ENCODE measurements at regions of chr3 and their contacts with region 1.

Region 1: DNA sequence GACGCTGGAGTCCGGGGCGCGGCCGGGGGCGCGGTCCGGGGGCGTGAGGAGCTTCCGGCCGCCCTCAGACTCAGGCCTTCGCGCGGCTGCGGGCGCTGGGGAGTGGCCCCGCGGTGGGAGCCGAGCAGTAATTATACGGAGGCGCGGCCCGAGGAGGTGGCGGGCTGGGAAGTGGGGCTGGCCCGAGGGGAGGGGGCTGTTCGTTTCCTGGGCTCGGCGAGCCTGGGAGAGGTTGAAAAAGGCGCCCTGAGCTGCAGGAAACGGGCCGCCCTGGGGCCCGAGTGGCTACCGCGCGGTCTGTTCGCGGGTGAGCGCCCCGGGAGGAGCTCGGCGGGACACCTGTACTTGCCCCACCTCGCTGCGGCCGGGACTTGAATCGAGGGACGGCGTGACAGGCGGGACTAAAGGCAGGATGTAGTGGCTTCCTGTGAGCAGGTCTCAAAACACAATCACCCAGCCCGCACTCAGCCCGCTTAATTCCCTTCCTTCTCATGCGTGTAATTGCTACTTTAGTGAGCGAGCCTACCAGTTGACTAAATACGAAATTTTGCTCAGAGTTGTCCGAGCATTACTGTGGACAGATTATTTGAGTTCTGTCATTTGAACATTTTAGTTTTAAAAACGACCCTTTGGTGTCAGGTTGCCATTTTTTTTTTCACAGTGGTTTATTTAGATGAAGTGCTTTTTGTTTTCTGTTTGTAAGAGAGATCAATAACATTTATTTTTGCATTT is 860 bp downstream of the RASA2 start:
- DNase-seq: peak; percentile 95
- ATAC-seq: peak; percentile 66
- H3K4me3 Mint-ChIP-seq: peak overlapping the region; percentile 87
- H3K27ac Mint-ChIP-seq: peak overlapping the region; percentile 99
- H3K4me1 Mint-ChIP-seq: peaks cover 64% of the 10 kb centered on the region
- H3K27me3 Mint-ChIP-seq: no peaks in the 10 kb centered on the region
- CTCF ChIP-seq: no peak

Region 2: DNA sequence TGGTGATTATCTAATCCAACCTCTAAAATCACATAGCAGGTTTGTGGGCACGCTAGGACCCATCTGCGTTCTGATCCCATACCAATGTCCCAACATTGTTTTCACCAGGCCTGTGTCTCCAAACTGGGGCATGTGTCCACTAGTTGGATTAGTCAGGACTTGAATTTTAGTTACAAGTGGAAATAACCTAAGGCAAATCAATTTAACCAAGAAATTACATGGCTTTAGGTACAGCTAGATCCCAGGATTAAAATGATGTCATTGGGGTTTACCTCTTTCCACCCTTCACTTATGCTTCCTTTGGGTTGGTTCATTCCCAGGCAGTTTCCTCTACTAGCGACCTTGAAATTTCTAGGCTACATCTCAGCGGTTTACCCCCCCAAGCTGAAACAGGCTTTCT is 303.3 kb before region 1 on chr3:
- CTCF ChIA-PET with region 1: no interaction called
- POLR2A ChIA-PET with region 1: no interaction called
- intact Hi-C with region 1: no loop called
- DNase-seq: no peak
- ATAC-seq: no peak
- H3K4me3 Mint-ChIP-seq: no peak overlapping the region
- H3K27ac Mint-ChIP-seq: no peak overlapping the region
- H3K4me1 Mint-ChIP-seq: no peaks in the 10 kb centered on the region
- H3K27me3 Mint-ChIP-seq: no peaks in the 10 kb centered on the region
- CTCF ChIP-seq: no peak

Region 3: DNA sequence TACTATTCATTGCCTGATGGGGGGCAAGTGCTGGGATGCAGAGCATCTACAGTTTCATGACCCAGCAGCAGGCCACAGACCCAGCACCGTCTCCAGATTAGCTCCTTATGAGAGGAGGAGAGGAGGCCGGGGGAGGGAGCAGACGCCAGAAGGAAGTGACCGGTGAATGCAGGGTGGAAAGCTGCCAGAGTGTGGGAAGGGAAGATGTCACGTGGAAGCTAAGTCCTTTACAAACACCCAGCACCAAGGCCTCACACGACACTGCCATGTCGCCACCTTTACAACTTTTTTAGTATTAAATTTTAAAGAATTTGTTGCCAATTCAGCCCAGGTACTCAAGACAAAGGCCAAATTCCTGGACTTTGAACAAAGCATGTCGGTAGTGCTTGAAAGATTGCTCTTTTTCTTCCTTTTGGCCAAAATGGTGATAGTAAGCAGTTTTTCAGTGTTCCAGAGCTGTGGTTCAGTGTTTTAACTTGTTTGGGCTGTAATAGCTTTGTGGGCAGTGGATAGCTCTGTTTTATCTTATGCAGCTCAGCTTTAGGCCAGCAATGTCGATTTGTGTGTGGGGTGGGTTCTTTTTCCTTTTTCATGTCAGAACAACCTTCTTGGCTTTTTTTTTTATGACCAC is 61.2 kb before region 1 on chr3:
- CTCF ChIA-PET with region 1: no interaction called
- POLR2A ChIA-PET with region 1: no interaction called
- intact Hi-C with region 1: no loop called
- DNase-seq: no peak
- ATAC-seq: no peak
- H3K4me3 Mint-ChIP-seq: no peak overlapping the region
- H3K27ac Mint-ChIP-seq: no peak overlapping the region
- H3K4me1 Mint-ChIP-seq: peaks cover 18% of the 10 kb centered on the region
- H3K27me3 Mint-ChIP-seq: no peaks in the 10 kb centered on the region
- CTCF ChIP-seq: no peak

Region 4: DNA sequence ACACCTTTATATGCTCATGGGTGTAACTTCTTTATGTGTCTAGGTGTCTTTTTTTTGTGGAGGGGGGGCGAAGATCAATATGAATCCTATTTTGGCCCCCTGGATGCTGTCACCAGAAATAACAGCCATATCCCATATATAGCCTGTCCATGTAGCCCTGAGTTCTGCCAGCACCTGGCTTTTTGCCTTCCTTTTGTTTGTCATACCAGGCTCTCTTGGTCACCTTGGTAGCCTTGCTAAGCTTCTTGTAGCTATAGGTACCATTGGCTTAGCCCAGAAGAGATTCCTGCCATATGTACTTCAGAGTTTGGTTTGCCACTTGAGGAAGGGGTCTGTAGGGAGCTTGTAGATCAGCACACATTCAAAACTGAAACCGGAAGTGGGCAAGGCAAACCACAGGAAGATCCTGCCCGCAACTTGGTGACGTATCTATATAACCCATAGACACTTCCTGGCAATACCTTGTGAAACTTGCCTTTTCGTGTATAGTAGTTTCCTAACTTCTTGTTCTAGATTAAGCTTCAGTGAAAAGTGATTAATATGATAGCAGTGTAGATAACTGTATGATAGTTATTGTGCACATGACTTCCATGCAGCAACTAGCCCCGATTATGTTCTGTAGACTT is 11.0 kb after region 1 on chr3:
- CTCF ChIA-PET with region 1: interaction called, 24 read pairs
- POLR2A ChIA-PET with region 1: interaction called, 102 read pairs
- intact Hi-C with region 1: loop called (anchors 1 kb)
- DNase-seq: peak; percentile 95
- ATAC-seq: peak; percentile 83
- H3K4me3 Mint-ChIP-seq: peak overlapping the region; percentile 63
- H3K27ac Mint-ChIP-seq: peak overlapping the region; percentile 97
- H3K4me1 Mint-ChIP-seq: peaks cover 67% of the 10 kb centered on the region
- H3K27me3 Mint-ChIP-seq: no peaks in the 10 kb centered on the region
- CTCF ChIP-seq: no peak

Region 5: GRCh38 chr3:141523615-141524375 is 36.1 kb after region 1 on chr3:
- CTCF ChIA-PET with region 1: no interaction called
- POLR2A ChIA-PET with region 1: interaction called, 20 read pairs
- intact Hi-C with region 1: no loop called
- DNase-seq: no peak
- ATAC-seq: peak; percentile 46
- H3K4me3 Mint-ChIP-seq: no peak overlapping the region
- H3K27ac Mint-ChIP-seq: peak overlapping the region; percentile 64
- H3K4me1 Mint-ChIP-seq: peaks cover 71% of the 10 kb centered on the region
- H3K27me3 Mint-ChIP-seq: no peaks in the 10 kb centered on the region
- CTCF ChIP-seq: no peak

Region 6: DNA sequence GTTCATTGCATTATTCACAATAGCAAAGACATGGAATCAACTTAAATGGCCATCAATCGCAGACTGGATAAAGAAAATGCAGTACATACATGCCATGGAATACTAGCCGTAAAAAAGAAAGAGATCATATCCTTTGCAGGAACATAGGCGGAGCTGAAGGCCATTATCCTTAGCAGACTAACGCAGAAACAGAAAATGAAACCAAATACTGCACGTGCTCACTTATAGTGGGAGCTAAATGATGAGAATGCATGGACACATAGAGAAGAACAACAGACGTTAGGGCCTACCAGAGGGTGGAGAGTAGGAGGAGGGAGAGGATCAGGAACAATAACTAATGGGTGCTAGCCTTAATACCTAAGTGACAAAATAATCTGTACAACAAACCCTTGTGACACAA is 57.0 kb after region 1 on chr3:
- CTCF ChIA-PET with region 1: interaction called, 3 read pairs
- POLR2A ChIA-PET with region 1: interaction called, 99 read pairs
- intact Hi-C with region 1: no loop called
- DNase-seq: no peak
- ATAC-seq: peak; percentile 52
- H3K4me3 Mint-ChIP-seq: peak overlapping the region; percentile 18
- H3K27ac Mint-ChIP-seq: peak overlapping the region; percentile 87
- H3K4me1 Mint-ChIP-seq: peaks cover 83% of the 10 kb centered on the region
- H3K27me3 Mint-ChIP-seq: no peaks in the 10 kb centered on the region
- CTCF ChIP-seq: no peak

Region 7: DNA sequence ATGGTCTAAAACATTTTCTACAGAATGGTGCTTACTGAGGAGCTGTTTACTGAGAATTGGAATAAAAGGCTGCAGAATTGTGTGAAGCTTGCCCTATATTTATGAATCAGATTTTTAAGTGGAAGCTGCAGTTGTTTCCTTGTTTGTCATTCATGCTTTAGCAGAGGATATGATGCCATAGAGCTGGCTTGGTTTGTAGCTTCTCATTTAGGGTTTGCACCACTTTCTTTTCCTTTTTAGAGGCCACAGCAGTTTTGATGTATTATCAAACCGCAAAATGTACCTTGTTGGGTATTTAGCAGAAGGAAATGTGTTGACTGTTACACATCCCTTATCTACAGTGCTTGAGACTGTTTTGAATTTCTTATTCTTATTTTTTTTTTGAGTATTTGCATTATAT is 65.4 kb after region 1 on chr3:
- CTCF ChIA-PET with region 1: interaction called, 74 read pairs
- POLR2A ChIA-PET with region 1: interaction called, 99 read pairs
- intact Hi-C with region 1: loop called (anchors 5 kb)
- DNase-seq: peak; percentile 25
- ATAC-seq: peak; percentile 71
- H3K4me3 Mint-ChIP-seq: peak overlapping the region; percentile 2
- H3K27ac Mint-ChIP-seq: peak overlapping the region; percentile 91
- H3K4me1 Mint-ChIP-seq: peaks cover 56% of the 10 kb centered on the region
- H3K27me3 Mint-ChIP-seq: no peaks in the 10 kb centered on the region
- CTCF ChIP-seq: no peak

Region 8: DNA sequence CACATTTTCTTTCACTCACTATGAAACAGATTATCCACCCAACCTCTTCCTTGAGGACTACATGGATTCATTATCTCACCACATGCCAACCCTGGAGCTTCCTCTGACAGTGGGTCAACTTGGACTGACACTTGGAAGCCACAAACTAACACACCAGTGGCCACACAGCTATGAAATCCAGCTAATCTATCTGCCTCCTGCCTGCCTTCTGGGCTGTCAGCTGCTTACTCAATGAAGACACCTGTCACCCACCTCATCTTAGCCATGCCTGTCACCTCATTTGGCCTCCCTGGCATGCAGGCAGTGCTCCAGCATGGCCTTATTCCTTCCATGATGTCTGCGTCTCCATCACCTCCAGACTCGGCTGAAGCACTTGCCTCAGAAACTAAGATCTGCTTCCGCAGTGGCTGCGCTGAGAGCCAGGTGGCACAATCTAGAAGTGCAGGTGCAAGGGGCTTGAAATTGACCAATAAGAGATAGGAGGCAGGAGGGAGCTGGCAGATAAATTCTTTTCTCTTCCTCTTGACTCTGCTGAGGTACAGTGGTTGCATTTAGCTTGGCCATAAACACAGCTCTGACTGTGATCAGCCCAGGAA is 145.2 kb after region 1 on chr3:
- CTCF ChIA-PET with region 1: no interaction called
- POLR2A ChIA-PET with region 1: no interaction called
- intact Hi-C with region 1: no loop called
- DNase-seq: no peak
- ATAC-seq: no peak
- H3K4me3 Mint-ChIP-seq: no peak overlapping the region
- H3K27ac Mint-ChIP-seq: no peak overlapping the region
- H3K4me1 Mint-ChIP-seq: no peaks in the 10 kb centered on the region
- H3K27me3 Mint-ChIP-seq: no peaks in the 10 kb centered on the region
- CTCF ChIP-seq: no peak